Prostate gland (tissue), 2 donors: ENCODE measurements at regions of chr1 and their contacts with region 1.

Region 1: GRCh38 chr1:150925816-150926741 is at the start of gene SETDB1:
- DNase-seq: peak; percentile 92
- H3K4me3 ChIP-seq: peak within 1 kb of the TSS; percentile 79 to 89
- H3K27ac ChIP-seq: peak within 1 kb of the TSS; percentile 81 to 83
- H3K4me1 ChIP-seq: no peaks in the 10 kb centered on the region
- H3K27me3 ChIP-seq: no peaks in the 10 kb centered on the region
- CTCF ChIP-seq: peak in 3 of 4 experiments; percentile 15 to 24 (median 22)
- POLR2A ChIP-seq: peak; percentile 44
- total RNA-seq, gene SETDB1: 26.3 to 63.8 TPM

Region 2: DNA sequence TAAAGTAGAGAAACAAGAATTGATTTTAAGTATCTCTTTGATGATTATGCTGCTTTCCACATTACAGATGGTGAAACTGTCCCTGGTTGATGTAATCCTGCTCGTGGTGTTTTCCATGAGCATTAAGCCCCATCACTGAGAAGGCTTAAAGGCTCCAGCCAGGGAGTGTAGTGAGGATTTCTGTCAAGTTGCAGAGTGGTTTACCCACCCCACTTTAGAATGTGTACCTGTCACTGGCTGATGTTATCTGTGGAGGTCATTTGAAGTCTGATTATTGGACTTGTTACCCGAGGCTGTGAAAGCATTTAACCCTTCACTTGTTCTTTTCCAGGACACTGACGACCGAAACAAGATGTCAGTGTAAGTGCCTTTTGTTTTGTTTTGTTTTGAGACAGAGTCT is 35.7 kb after region 1 on chr1:
- intact Hi-C with region 1: no loop called
- DNase-seq: no peak
- H3K4me3 ChIP-seq: no peak overlapping the region
- H3K27ac ChIP-seq: no peak overlapping the region
- H3K4me1 ChIP-seq: no peaks in the 10 kb centered on the region
- H3K27me3 ChIP-seq: no peaks in the 10 kb centered on the region
- CTCF ChIP-seq: no peak
- POLR2A ChIP-seq: no peak

Region 3: GRCh38 chr1:150979092-150980056 is 53.3 kb after region 1 on chr1:
- intact Hi-C with region 1: loop called (anchors 5 kb)
- DNase-seq: peak; percentile 85
- H3K4me3 ChIP-seq: no peak overlapping the region
- H3K27ac ChIP-seq: peak overlapping the region in 1 of 2 donors; percentile 44
- H3K4me1 ChIP-seq: peaks cover 3% of the 10 kb centered on the region
- H3K27me3 ChIP-seq: no peaks in the 10 kb centered on the region
- CTCF ChIP-seq: peak; percentile 96 to 99 (median 96)
- POLR2A ChIP-seq: no peak

Region 4: DNA sequence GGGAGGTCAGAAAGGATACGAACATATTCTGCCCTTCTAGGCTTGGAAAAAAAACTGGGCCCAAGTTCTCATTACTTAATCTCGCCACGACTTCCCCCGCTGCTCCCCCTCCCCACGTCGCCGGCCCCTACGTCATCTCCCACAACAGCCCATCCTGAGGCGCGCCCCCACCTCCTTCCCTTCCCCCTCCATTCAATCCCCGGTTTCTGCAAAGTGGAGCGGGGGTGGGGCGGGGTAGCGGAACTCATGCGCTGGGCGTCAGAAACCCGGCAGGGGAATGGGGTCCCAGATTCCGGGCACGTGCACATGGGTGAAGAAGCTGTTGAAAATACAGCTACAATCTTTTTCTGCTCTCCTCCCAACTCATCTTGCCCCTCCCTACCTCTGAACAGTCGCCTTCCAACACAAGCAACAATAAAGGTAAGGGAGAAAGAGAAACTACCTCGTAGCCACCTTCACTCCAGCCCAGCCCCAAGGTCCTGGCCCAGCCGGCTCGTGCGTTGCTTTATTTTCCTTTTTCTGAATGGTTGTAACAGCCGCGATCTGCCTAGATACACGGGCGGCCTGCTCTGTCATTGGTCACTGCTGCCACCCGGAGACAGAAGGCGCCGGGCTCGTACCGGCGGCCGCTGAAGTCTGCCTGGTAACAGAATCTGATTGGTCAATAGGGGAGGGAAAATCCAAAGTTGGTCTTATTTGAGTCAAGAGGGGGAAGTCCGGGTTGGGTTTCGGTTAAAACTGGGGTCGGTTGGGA is 420.9 kb after region 1 on chr1 and contains the start of gene RFX5:
- intact Hi-C with region 1: no loop called
- DNase-seq: peak; percentile 95
- H3K4me3 ChIP-seq: peak within 1 kb of the TSS; percentile 54 to 59
- H3K27ac ChIP-seq: peak within 1 kb of the TSS; percentile 80 to 87
- H3K4me1 ChIP-seq: peaks cover 4% of the 10 kb centered on the region
- H3K27me3 ChIP-seq: no peaks in the 10 kb centered on the region
- CTCF ChIP-seq: no peak
- POLR2A ChIP-seq: no peak
- total RNA-seq, gene RFX5: 25.5 to 27.2 TPM